ENCODE measurements at regions of chr1 and their contacts with region 1.

Region 1: DNA sequence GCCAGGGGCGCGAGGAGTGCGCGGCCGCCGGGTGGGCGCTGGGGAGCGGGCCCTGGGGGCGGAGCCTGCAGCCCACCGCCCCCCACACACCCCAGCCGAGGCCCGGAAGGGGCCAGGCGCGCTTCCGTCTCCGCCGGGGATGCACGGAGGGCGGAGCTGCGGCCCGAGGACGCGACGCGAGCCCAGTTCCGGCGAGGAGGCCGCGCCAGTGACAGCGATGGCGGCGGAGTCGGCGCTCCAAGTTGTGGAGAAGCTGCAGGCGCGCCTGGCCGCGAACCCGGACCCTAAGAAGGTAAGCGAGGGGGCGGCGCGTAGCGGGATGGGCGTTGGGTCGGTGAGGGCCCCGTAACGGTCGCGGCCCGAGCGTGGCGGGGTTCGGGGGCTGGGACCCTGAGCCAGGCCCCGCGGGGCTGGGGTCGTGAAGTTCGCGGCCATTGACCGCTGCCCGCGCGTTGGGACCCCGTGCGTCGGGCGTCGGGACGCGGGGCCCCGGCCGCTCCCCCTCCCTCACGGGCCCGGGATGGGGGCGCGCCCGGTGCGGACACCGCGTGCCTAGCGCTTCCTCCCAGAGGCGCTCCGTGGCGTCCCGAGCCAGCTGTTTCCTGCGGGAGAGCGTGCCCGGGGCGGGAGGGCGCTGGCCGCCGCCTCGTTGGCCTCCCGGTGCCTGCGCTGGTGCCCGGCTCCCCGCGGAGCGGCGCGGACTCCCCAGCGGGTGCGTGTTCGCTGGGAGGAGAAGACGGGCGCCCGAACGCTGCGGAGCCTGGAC is at the start of gene ELOA:
- DNase-seq: peak; percentile 84
- H3K4me3 ChIP-seq: peak within 1 kb of the TSS; percentile 91
- H3K27ac ChIP-seq: peak within 1 kb of the TSS; percentile 42
- H3K4me1 ChIP-seq: peaks cover 29% of the 10 kb centered on the region
- CTCF ChIP-seq: no peak
- total RNA-seq, gene ELOA: 24.7 and 29.1 TPM in 2 replicates

Region 2: DNA sequence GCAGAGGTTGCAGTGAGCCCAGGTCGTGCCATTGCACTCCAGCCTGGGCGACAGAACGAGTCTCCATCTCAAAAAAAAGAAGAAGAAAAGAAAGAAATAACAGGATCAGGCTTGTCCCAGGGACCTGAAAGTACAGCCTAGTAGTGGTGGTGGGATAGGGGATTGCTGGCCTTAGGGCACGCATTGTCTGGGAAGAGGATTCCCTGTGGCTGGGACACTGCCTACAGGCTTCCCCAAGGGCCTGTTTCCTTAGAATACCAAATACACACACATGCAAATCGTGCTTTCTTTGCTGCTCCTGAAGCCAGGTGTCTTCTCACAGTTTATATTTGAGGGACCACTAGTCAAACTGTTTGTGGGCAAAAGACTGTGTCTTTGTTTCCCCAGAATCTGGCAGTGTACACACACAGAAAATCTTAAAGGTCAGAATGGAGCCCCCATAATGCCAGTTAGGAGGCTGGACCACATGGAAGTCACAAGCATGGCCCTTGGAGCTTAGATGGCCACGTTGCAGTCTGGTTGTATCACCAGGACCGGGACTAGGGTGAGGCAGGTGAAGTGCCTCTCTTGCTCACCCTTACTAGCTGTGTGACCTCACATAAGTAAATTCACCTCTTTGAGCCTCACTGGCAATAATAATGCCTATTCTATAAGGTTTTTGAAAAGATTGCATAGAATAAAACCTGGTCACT is 246.8 kb before region 1 on chr1:
- CTCF ChIA-PET with region 1: no interaction called
- POLR2A ChIA-PET with region 1: interaction called, 4 read pairs
- intact Hi-C with region 1: loop called (anchors 10 kb)
- DNase-seq: no peak
- H3K4me3 ChIP-seq: no peak overlapping the region
- H3K27ac ChIP-seq: no peak overlapping the region
- H3K4me1 ChIP-seq: peaks cover 21% of the 10 kb centered on the region
- CTCF ChIP-seq: no peak

Region 3: GRCh38 chr1:23664837-23665795 is 78.4 kb before region 1 on chr1:
- CTCF ChIA-PET with region 1: interaction called, 12 read pairs
- POLR2A ChIA-PET with region 1: interaction called, 5 read pairs
- intact Hi-C with region 1: no loop called
- DNase-seq: peak; percentile 81
- H3K4me3 ChIP-seq: no peak overlapping the region
- H3K27ac ChIP-seq: peak overlapping the region; percentile 70
- H3K4me1 ChIP-seq: peaks cover 50% of the 10 kb centered on the region
- CTCF ChIP-seq: peak; percentile 78

Region 4: GRCh38 chr1:23691499-23692307 is 51.8 kb before region 1 on chr1 and contains the start of gene RPL11:
- CTCF ChIA-PET with region 1: no interaction called
- POLR2A ChIA-PET with region 1: interaction called, 4 read pairs
- intact Hi-C with region 1: loop called (anchors 2 kb)
- DNase-seq: peak; percentile 97
- H3K4me3 ChIP-seq: peak within 1 kb of the TSS; percentile 90
- H3K27ac ChIP-seq: peak within 1 kb of the TSS; percentile 68
- H3K4me1 ChIP-seq: peaks cover 40% of the 10 kb centered on the region
- CTCF ChIP-seq: peak; percentile 80
- total RNA-seq, gene RPL11: 1,891 and 2,496 TPM in 2 replicates

Region 5: GRCh38 chr1:23727362-23727827 is 16.1 kb before region 1 on chr1:
- CTCF ChIA-PET with region 1: no interaction called
- POLR2A ChIA-PET with region 1: interaction called, 6 read pairs
- intact Hi-C with region 1: loop called (anchors 2 kb)
- DNase-seq: peak; percentile 40
- H3K4me3 ChIP-seq: no peak overlapping the region
- H3K27ac ChIP-seq: peak overlapping the region; percentile 15
- H3K4me1 ChIP-seq: peaks cover 46% of the 10 kb centered on the region
- CTCF ChIP-seq: no peak